CD8-positive, alpha-beta T cell (primary cell): ENCODE measurements at regions of chr1 and their contacts with region 1.

Region 1: GRCh38 chr1:197521118-197521739 is 253.2 kb downstream of the CRB1 start:
- DNase-seq: peak in 3 of 9 experiments; percentile 19 to 59 (median 44)
- ATAC-seq: peak; percentile 52
- H3K4me3 ChIP-seq: no peak overlapping the region
- H3K4me3 Mint-ChIP-seq: no peak overlapping the region
- H3K27ac ChIP-seq: no peak overlapping the region
- H3K27ac Mint-ChIP-seq: no peak overlapping the region
- H3K4me1 ChIP-seq: no peaks in the 10 kb centered on the region
- H3K4me1 Mint-ChIP-seq: no peaks in the 10 kb centered on the region
- H3K27me3 ChIP-seq: no peaks in the 10 kb centered on the region
- H3K27me3 Mint-ChIP-seq: no peaks in the 10 kb centered on the region
- CTCF ChIP-seq: peak; percentile 87

Region 2: DNA sequence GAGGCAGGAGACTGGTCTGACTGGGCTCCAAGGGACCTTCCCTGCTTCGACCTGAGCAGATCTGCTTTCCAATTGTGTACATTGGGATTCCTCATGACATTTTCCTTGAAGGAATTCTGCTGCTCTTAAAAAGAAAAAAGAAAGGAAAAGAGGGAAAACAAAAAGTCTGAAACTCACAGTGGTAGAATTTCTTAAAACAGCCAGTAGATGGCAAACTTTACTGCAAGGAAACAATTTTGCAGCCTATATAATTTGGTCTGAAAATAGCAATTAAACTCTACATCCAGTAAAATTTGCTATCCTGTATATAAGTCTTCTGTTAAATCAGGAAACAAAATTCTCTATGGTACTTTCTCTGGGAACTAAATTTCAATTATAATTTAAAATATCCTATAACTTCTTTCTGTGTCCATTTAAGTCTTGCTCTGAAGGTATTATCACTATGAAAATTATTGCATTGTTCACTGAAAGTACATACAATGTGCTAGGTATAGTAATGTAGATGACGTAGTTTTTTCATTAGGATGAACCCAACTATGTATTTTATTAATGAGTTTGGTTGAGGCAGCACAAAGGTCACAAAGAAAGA is 193.4 kb before region 1 on chr1:
- CTCF ChIA-PET with region 1: interaction called, 4 read pairs
- POLR2A ChIA-PET with region 1: no interaction called
- intact Hi-C with region 1: loop called (anchors 5 kb)
- DNase-seq: peak in 2 of 9 experiments; percentile 2 to 10
- ATAC-seq: no peak
- H3K4me3 ChIP-seq: no peak overlapping the region
- H3K4me3 Mint-ChIP-seq: no peak overlapping the region
- H3K27ac ChIP-seq: no peak overlapping the region
- H3K27ac Mint-ChIP-seq: no peak overlapping the region
- H3K4me1 ChIP-seq: no peaks in the 10 kb centered on the region
- H3K4me1 Mint-ChIP-seq: no peaks in the 10 kb centered on the region
- H3K27me3 ChIP-seq: no peaks in the 10 kb centered on the region
- H3K27me3 Mint-ChIP-seq: no peaks in the 10 kb centered on the region
- CTCF ChIP-seq: peak; percentile 64

Region 3: GRCh38 chr1:197775282-197776262 is 254.3 kb after region 1 on chr1 and contains the start of gene DENND1B:
- CTCF ChIA-PET with region 1: no interaction called
- POLR2A ChIA-PET with region 1: no interaction called
- intact Hi-C with region 1: loop called in 1 of 2 experiments (anchors 10 kb)
- DNase-seq: peak; percentile 56 to 90 (median 83)
- ATAC-seq: peak; percentile 55
- H3K4me3 ChIP-seq: peak within 1 kb of the TSS; percentile 62 to 71
- H3K4me3 Mint-ChIP-seq: peak within 1 kb of the TSS; percentile 83
- H3K27ac ChIP-seq: peak within 1 kb of the TSS; percentile 61 to 88
- H3K27ac Mint-ChIP-seq: peak within 1 kb of the TSS; percentile 97
- H3K4me1 ChIP-seq: peaks cover 33% of the 10 kb centered on the region
- H3K4me1 Mint-ChIP-seq: peaks cover 66% of the 10 kb centered on the region
- H3K27me3 ChIP-seq: no peaks in the 10 kb centered on the region
- H3K27me3 Mint-ChIP-seq: no peaks in the 10 kb centered on the region
- CTCF ChIP-seq: no peak
- total RNA-seq, gene DENND1B: 17.6 to 19.6 TPM

Region 4: DNA sequence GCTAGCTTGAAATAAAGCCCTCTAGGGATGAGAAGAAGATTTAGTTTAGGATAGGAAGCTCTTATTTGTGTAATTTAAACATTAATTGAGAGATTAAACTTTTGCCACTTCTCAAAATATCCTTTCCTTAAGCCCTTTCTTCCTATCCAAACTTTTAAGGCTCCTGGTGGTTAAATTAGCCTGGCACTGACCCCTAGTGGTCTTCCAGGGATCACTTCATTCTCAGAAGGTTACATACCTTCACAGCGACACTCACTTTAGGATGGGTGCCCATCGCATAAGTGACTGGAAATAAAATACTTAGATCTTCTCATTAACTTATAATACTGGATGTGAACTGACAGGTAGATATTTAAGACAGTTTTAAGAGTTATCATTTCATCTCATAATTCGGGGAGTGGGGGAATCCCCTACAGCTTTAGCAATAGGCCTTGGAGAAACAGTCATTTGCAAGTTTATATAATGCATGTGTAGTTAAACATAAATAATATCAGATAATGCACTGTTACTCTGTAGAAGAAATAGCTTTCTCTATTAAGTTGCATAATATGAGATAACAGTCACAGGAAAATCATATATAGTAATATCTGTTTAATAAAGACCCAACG is 403.4 kb after region 1 on chr1:
- CTCF ChIA-PET with region 1: interaction called, 19 read pairs
- POLR2A ChIA-PET with region 1: no interaction called
- intact Hi-C with region 1: loop called (anchors 1 kb)
- DNase-seq: peak in 3 of 9 experiments; percentile 40 to 72 (median 63)
- ATAC-seq: peak; percentile 64
- H3K4me3 ChIP-seq: no peak overlapping the region
- H3K4me3 Mint-ChIP-seq: no peak overlapping the region
- H3K27ac ChIP-seq: no peak overlapping the region
- H3K27ac Mint-ChIP-seq: no peak overlapping the region
- H3K4me1 ChIP-seq: peaks cover 11% of the 10 kb centered on the region
- H3K4me1 Mint-ChIP-seq: peaks cover 20% of the 10 kb centered on the region
- H3K27me3 ChIP-seq: peaks cover 30 to 37% of the 10 kb centered on the region in 2 experiments
- H3K27me3 Mint-ChIP-seq: peaks cover 63% of the 10 kb centered on the region
- CTCF ChIP-seq: peak; percentile 75

Region 5: GRCh38 chr1:198147216-198147615 is 626.0 kb after region 1 on chr1:
- CTCF ChIA-PET with region 1: no interaction called
- POLR2A ChIA-PET with region 1: no interaction called
- intact Hi-C with region 1: loop called in 1 of 2 experiments (anchors 5 kb)
- DNase-seq: no peak
- ATAC-seq: no peak
- H3K4me3 ChIP-seq: no peak overlapping the region
- H3K4me3 Mint-ChIP-seq: no peak overlapping the region
- H3K27ac ChIP-seq: no peak overlapping the region
- H3K27ac Mint-ChIP-seq: no peak overlapping the region
- H3K4me1 ChIP-seq: no peaks in the 10 kb centered on the region
- H3K4me1 Mint-ChIP-seq: peaks cover 4% of the 10 kb centered on the region
- H3K27me3 ChIP-seq: no peaks in the 10 kb centered on the region
- H3K27me3 Mint-ChIP-seq: no peaks in the 10 kb centered on the region
- CTCF ChIP-seq: no peak

Region 6: DNA sequence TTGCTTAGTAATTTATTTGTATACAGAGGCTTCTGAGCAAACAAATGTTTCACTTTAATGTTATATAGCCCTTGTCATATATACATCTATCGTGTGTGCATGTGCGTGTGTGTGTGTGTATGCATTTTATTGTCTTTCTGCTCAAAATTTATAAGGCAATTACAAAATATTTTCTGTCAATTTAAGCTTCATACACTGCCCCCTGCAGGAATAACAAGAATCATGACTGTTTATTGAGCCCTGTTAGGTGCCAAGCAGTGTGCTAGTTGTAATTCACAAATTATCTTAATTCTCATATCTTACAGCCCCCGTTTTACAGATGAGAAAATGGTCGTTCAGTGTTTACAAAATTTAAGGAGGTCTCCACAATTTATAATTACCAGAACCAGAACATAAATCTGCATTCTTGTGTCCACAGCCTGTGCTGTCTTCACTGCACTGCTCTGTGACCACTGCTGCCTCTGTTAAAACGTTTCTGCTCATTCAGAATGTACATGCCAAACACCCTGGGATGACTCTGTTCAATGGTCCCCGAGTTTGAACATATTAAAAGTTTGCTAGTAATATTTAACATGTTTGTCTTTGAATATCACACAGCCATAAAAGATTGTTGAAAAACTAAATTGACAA is 837.9 kb after region 1 on chr1:
- CTCF ChIA-PET with region 1: no interaction called
- POLR2A ChIA-PET with region 1: no interaction called
- intact Hi-C with region 1: loop called (anchors 5 to 10 kb)
- DNase-seq: peak in 2 of 9 experiments; percentile 32 to 49
- ATAC-seq: no peak
- H3K4me3 ChIP-seq: no peak overlapping the region
- H3K4me3 Mint-ChIP-seq: no peak overlapping the region
- H3K27ac ChIP-seq: no peak overlapping the region
- H3K27ac Mint-ChIP-seq: no peak overlapping the region
- H3K4me1 ChIP-seq: no peaks in the 10 kb centered on the region
- H3K4me1 Mint-ChIP-seq: no peaks in the 10 kb centered on the region
- H3K27me3 ChIP-seq: no peaks in the 10 kb centered on the region
- H3K27me3 Mint-ChIP-seq: no peaks in the 10 kb centered on the region
- CTCF ChIP-seq: peak; percentile 54